Activated naive CD8-positive, alpha-beta T cell treated with anti-CD3 and anti-CD28 coated beads, Interleukin-2, amount 10 ng/mL, durations not matched to agents 7 days and 5 days (primary cell): ENCODE measurements at regions of chrX and their contacts with region 1.

Region 1: DNA sequence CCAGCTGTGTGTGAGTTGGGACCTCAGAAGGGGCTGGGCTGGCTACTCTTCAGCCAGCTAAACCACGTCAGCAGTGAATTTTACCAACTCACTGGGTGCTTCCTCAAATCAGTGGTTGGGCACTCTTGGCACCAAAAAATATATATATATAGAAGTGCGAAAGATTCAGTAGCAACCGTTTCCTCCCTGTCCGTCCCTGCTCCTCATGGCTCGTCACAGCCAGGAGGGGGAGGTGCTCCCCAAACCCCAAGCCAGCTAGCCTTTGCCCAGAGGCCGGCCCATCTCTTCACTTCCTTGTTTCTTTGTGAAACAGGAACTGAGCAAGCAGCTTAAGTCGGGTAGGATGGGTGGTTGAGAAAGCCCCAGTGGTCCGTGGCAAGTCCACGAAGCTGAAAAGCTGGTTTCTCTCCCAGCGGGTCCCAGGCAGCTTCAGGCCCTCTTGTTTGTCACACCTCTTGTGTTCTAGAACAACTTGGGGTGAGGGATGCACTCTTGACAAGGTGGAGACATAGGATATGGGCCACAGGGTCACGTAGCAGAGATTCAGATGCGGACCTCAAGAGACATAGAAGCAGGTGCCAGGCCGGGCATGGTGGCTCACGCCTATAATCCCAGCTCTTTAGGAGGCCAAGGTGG is 6.8 kb upstream of the SASH3 start:
- DNase-seq: peak; percentile 49
- ATAC-seq: peak; percentile 16
- H3K4me3 Mint-ChIP-seq: peak overlapping the region; percentile 75
- H3K27ac Mint-ChIP-seq: peak overlapping the region; percentile 97
- H3K4me1 Mint-ChIP-seq: peaks cover 55% of the 10 kb centered on the region
- H3K27me3 Mint-ChIP-seq: no peaks in the 10 kb centered on the region

Region 2: GRCh38 chrX:129741880-129742758 is 30.8 kb before region 1 on chrX:
- POLR2A ChIA-PET with region 1: interaction called, 10 read pairs
- DNase-seq: no peak
- ATAC-seq: no peak
- H3K4me3 Mint-ChIP-seq: peak overlapping the region; percentile 72
- H3K27ac Mint-ChIP-seq: peak overlapping the region; percentile 98
- H3K4me1 Mint-ChIP-seq: peaks cover 52% of the 10 kb centered on the region
- H3K27me3 Mint-ChIP-seq: no peaks in the 10 kb centered on the region

Region 3: GRCh38 chrX:129754056-129755024 is 18.6 kb before region 1 on chrX:
- POLR2A ChIA-PET with region 1: interaction called, 26 read pairs
- DNase-seq: no peak
- ATAC-seq: no peak
- H3K4me3 Mint-ChIP-seq: no peak overlapping the region
- H3K27ac Mint-ChIP-seq: peak overlapping the region; percentile 83
- H3K4me1 Mint-ChIP-seq: peaks cover 40% of the 10 kb centered on the region
- H3K27me3 Mint-ChIP-seq: no peaks in the 10 kb centered on the region

Region 4: DNA sequence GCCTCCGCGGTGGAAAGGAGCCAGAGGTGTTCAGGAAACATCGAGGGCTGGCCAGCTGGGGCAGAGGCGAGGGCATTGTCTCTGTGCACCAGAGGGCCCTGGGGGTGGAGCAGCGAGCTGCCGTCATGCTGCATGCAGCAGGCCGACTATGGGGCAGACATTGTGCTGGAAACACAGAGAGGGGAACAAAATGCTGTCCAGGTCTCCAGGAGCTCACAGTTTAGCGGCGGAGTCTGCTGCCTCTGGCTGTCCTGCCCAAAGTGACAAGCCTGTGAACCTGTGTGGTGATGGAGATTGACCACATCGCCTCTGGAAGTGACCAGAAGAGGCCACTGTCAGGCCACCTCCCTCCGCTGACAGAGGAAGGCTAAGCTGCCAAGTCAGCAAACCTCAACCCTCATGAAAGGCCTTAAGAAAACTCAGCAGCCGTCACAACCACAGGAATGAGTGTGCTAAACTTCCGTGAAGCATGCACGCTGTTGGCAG is 13.3 kb before region 1 on chrX:
- POLR2A ChIA-PET with region 1: interaction called, 26 read pairs
- DNase-seq: peak; percentile 63
- ATAC-seq: peak; percentile 71
- H3K4me3 Mint-ChIP-seq: peak overlapping the region; percentile 39
- H3K27ac Mint-ChIP-seq: peak overlapping the region; percentile 84
- H3K4me1 Mint-ChIP-seq: peaks cover 46% of the 10 kb centered on the region
- H3K27me3 Mint-ChIP-seq: peaks cover 1% of the 10 kb centered on the region

Region 5: GRCh38 chrX:129804806-129805205 is 31.9 kb after region 1 on chrX:
- POLR2A ChIA-PET with region 1: no interaction called
- DNase-seq: no peak
- ATAC-seq: no peak
- H3K4me3 Mint-ChIP-seq: no peak overlapping the region
- H3K27ac Mint-ChIP-seq: no peak overlapping the region
- H3K4me1 Mint-ChIP-seq: peaks cover 19% of the 10 kb centered on the region
- H3K27me3 Mint-ChIP-seq: no peaks in the 10 kb centered on the region